Activated CD8-positive, alpha-beta T cell treated with anti-CD3 and anti-CD28 coated beads for 36 hours (primary cell): ENCODE measurements at regions of chr17 and their contacts with region 1.

Region 1: GRCh38 chr17:10697092-10698081 is at the starts of genes ADPRM and SCO1:
- DNase-seq: peak; percentile 94
- ATAC-seq: peak; percentile 96
- H3K4me3 Mint-ChIP-seq: peak within 1 kb of the TSS; percentile 91
- H3K27ac Mint-ChIP-seq: peak within 1 kb of the TSS; percentile 95
- H3K4me1 Mint-ChIP-seq: peaks cover 54% of the 10 kb centered on the region
- H3K27me3 Mint-ChIP-seq: no peaks in the 10 kb centered on the region
- CTCF ChIP-seq: peak; percentile 24
- total RNA-seq, gene ADPRM: 13.0 to 13.6 TPM
- total RNA-seq, gene SCO1: 45.3 to 45.4 TPM

Region 2: DNA sequence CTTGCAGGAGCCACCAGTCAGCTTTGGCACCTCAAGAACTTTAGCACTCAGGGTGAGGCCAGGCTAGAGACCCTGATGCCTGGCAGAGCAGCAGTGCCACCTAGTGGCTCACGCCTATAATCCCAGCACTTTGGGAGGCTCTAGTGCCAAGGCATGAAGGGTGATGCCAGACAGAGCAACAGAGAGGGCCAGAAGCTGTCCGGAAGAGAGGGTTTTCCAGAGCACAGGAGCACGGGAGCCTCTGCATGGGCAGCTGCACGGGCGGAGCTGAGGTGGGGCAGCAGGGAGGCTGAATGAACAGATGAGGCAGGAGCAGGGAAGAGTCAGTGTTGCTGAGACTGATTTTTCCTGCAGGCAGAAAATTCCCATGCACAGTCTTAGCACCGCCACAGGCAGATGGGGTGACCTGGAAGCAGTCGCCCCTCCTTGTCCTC is 79.2 kb before region 1 on chr17:
- CTCF ChIA-PET with region 1: no interaction called
- POLR2A ChIA-PET with region 1: no interaction called
- intact Hi-C with region 1: no loop called
- DNase-seq: peak; percentile 69
- ATAC-seq: peak; percentile 84
- H3K4me3 Mint-ChIP-seq: no peak overlapping the region
- H3K27ac Mint-ChIP-seq: no peak overlapping the region
- H3K4me1 Mint-ChIP-seq: no peaks in the 10 kb centered on the region
- H3K27me3 Mint-ChIP-seq: peaks cover 2% of the 10 kb centered on the region
- CTCF ChIP-seq: peak; percentile 80

Region 3: GRCh38 chr17:10683853-10684252 is 13.5 kb before region 1 on chr17:
- CTCF ChIA-PET with region 1: interaction called, 37 read pairs
- POLR2A ChIA-PET with region 1: no interaction called
- intact Hi-C with region 1: no loop called
- DNase-seq: no peak
- ATAC-seq: no peak
- H3K4me3 Mint-ChIP-seq: no peak overlapping the region
- H3K27ac Mint-ChIP-seq: no peak overlapping the region
- H3K4me1 Mint-ChIP-seq: peaks cover 6% of the 10 kb centered on the region
- H3K27me3 Mint-ChIP-seq: no peaks in the 10 kb centered on the region
- CTCF ChIP-seq: peak; percentile 67

Region 4: DNA sequence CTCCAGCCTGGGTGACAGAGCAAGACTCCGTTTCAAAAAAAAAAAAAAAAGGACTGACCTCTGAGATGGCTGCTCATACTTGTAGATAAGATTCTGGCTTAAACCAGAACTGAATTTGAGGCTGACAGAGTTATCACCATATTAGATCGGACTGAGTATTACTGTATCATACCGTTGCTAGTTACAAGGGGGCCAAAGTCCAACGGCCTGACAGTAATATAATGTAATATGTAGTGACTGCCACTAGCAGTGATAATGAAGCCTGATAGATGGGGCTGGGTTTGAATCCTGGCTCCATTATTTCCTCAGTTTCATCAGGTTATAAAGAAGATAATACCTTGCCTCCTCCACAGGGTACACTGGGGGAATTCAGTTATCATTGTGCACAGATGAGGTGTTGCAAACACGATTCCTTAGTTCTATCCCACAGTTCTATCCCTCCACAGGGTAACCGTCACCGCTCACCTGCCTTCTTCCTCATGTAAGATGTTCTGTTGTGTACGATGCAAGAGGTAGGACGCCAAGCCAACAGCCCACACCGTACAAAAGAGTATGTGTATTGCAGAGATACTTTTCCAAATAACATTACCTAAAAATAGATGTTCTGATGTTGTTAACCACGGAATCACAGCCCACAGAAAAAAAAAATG is 27.3 kb after region 1 on chr17:
- CTCF ChIA-PET with region 1: no interaction called
- POLR2A ChIA-PET with region 1: no interaction called
- intact Hi-C with region 1: no loop called
- DNase-seq: no peak
- ATAC-seq: no peak
- H3K4me3 Mint-ChIP-seq: no peak overlapping the region
- H3K27ac Mint-ChIP-seq: no peak overlapping the region
- H3K4me1 Mint-ChIP-seq: peaks cover 11% of the 10 kb centered on the region
- H3K27me3 Mint-ChIP-seq: no peaks in the 10 kb centered on the region
- CTCF ChIP-seq: no peak